ENCODE measurements at regions of chr17 and their contacts with region 1.

Region 1: DNA sequence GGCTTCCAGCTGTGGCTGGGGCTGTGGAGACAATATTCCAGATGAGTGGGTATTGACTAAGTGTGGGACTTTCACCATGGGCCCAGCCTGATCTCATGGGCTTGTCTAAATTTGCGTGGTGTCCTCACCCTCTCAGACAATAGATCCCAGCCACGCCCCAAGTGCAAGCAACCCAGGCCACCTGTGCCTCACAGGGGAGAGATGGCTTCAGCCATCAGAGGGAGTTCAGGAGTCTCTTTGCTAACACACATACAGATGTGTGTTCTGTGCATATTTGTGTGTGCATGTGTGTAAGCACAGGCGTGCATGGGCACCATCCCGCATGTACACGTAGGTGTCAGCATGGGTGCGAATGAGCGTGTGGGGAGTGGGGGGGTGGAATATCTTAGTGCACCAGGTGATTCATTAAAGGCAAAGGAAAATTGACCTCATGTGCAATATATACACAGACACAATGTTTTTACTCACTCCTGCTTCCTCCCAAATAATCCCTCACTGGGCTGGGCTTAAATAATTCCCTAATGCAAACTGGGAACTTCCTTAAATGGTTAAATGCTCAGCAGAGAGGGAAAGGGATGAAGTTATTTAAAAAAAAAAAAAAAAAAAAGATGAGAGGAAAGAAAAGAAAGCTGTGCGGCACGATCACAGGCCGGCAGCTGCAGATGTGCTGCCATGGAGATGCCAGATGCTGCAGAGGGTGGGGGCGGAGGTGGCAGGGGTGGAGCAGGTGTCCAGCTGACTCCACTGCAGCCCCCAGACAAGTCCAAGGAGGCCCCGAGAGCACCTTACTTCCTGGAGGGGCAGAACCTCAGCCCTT is 24.0 kb upstream of the CDC42EP4 start:
- DNase-seq: no peak
- H3K4me3 ChIP-seq: no peak overlapping the region
- H3K27ac ChIP-seq: peak overlapping the region in 14 of 59 donors; percentile 4 to 75 (median 30)
- H3K27me3 ChIP-seq: no peaks in the 10 kb centered on the region
- CTCF ChIP-seq: no peak

Region 2: GRCh38 chr17:73320601-73321264 is 15.1 kb before region 1 on chr17:
- intact Hi-C with region 1: loop called in 1 of 2 experiments (anchors 2 kb)
- DNase-seq: no peak
- H3K4me3 ChIP-seq: no peak overlapping the region
- H3K27ac ChIP-seq: no peak overlapping the region
- H3K27me3 ChIP-seq: no peaks in the 10 kb centered on the region
- CTCF ChIP-seq: no peak

Measured in dorsolateral prefrontal cortex (tissue), 120 donors.